A549 (cell line): ENCODE measurements at regions of chr18 and their contacts with region 1.

Region 1: DNA sequence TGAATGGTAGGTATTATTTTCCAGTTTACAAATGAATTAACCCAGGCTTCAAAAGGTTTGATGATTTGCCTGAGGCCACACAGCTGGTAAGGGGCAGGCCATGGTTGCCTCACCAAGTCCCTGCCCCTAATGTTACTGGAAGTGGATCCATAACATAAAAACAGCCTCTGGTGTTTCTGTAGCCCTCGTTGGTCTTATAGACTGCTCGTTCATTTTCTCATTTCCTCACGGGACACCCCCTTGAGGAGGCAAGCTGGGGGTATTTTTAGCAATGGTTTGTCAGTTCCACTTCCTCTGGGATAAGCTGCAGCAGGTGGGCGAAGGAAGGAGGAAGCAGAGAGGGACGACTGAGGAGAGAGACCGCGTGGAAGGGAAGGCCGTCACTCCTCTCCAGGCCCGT is 32.9 kb upstream of the NDUFV2 start:
- DNase-seq: no peak
- ATAC-seq: no peak
- H3K4me3 ChIP-seq: no peak overlapping the region
- H3K27ac ChIP-seq: no peak overlapping the region
- H3K4me1 ChIP-seq: peaks cover 12% of the 10 kb centered on the region; the same call in 2 of the 3 replicates
- CTCF ChIP-seq: no peak
- EP300 ChIP-seq: no peak
- POLR2A ChIP-seq: no peak
- RAD21 ChIP-seq: no peak

Region 2: DNA sequence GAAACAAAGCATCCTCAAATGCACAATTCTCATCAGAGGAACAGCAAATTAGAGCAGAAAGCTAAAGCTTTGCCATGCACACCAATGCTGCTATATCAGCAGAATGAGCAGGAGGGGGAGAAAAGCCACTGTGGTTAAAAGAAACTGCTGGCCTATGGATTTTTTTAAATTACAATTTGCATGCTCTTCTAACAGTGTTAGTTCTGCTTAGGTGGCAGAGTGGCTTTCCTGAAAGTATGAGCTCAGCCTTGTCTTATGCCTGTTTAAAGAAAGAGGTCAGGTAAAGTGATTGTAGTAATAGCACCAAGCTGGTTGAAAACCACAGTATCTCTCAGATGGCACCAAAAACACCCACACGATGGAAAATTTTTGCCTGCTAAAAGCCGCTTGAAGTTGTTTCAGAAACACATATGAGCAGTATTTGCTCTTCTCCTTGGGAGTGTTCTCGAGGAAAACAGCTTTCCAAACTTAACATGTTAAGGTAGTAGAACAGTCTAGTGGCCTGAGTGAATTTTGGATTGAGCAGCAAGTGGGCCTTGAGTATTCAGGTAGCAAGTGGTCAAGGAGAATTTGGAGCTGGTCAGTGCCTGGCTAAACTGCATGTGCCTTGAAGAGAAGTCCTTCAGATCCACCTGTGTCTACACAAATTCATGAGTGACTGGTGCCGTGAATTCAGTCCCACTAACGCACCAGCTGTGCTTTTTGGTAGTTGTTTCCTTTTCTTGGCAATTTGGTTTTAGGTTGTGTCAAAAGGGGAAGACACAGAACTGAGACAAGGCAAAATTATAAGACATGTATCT is 13.3 kb after region 1 on chr18:
- CTCF ChIA-PET with region 1: interaction called, 13 read pairs
- POLR2A ChIA-PET with region 1: no interaction called
- DNase-seq: no peak
- ATAC-seq: no peak
- H3K4me3 ChIP-seq: no peak overlapping the region
- H3K27ac ChIP-seq: 0 out of 6 replicates have a peak overlapping the region, but pooled peaks of 1 of the 2 experiments have one; percentile 31
- H3K4me1 ChIP-seq: 0 out of 3 replicates have a peak, but pooled peaks cover 9% of the 10 kb centered on the region
- CTCF ChIP-seq: no peak
- EP300 ChIP-seq: no peak
- POLR2A ChIP-seq: no peak
- RAD21 ChIP-seq: no peak

Region 3: GRCh38 chr18:9102508-9103375 is 33.1 kb after region 1 on chr18 and contains the start of gene NDUFV2:
- CTCF ChIA-PET with region 1: interaction called, 7 read pairs
- POLR2A ChIA-PET with region 1: interaction called, 13 read pairs
- DNase-seq: peak; percentile 76 to 94
- ATAC-seq: peak; percentile 97
- H3K4me3 ChIP-seq: peak within 1 kb of the TSS; percentile 69
- H3K27ac ChIP-seq: peak within 1 kb of the TSS; percentile 95
- H3K4me1 ChIP-seq: peaks cover 41% of the 10 kb centered on the region
- CTCF ChIP-seq: no peak
- EP300 ChIP-seq: no peak
- POLR2A ChIP-seq: peak; percentile 49
- RAD21 ChIP-seq: 0 out of 5 replicates have a peak, but pooled peaks of 1 of the 2 experiments have one; percentile 11
- polyA plus RNA-seq, gene NDUFV2: 152 and 180 TPM in 2 replicates

Region 4: GRCh38 chr18:9136315-9137155 is 66.9 kb after region 1 on chr18 and contains the start of gene ANKRD12:
- CTCF ChIA-PET with region 1: interaction called, 48 read pairs
- POLR2A ChIA-PET with region 1: no interaction called
- DNase-seq: peak; percentile 83 to 95
- ATAC-seq: peak; percentile 85 to 88
- H3K4me3 ChIP-seq: peak within 1 kb of the TSS; percentile 62
- H3K27ac ChIP-seq: peak within 1 kb of the TSS; percentile 84 to 89
- H3K4me1 ChIP-seq: peaks cover 56% of the 10 kb centered on the region
- CTCF ChIP-seq: no peak
- EP300 ChIP-seq: no peak
- POLR2A ChIP-seq: peak; percentile 31
- RAD21 ChIP-seq: no peak
- polyA plus RNA-seq, gene ANKRD12: 7.3 and 8.0 TPM in 2 replicates

Region 5: DNA sequence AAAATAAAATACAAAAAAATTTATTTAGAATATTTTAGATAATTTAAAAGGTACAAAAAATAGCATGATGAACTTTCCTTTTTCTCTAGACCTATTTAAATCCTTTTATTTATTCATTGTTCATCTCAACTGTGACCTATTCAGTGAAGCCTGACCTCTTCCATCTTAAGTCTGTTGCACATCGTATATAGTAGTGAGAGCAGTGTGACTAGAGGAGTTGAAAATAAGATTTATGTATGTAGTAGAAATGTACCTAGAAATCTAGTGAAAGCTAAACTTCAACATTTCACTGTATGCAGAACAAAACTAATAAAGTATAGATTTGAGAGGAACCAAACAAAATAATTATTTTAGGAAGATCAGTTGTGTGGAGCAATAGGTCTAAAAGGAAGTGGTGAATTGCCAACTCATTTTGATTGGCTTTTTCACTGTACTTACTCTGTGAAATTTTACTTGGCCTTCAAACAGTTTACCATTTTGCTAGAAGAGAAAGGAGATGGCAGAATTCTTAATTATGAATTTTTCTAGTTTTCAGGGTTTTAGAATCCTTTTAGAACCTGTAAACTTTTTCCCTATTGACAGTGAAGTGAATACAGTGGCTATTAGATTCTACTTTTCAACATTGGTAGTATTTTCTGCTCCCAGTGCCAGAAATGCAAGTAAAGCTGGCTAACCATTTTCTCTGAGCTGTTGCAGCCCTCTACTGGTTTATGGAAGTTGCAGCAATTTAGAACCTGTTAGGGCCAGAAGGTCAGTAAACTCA is 78.0 kb after region 1 on chr18:
- CTCF ChIA-PET with region 1: interaction called, 48 read pairs
- POLR2A ChIA-PET with region 1: no interaction called
- DNase-seq: peak; percentile 41 to 75
- ATAC-seq: peak; percentile 84 to 86
- H3K4me3 ChIP-seq: no peak overlapping the region
- H3K27ac ChIP-seq: peak overlapping the region; percentile 12 to 33; a peak in 2 of 6 replicates
- H3K4me1 ChIP-seq: peaks cover 46% of the 10 kb centered on the region
- CTCF ChIP-seq: peak; percentile 71
- EP300 ChIP-seq: no peak
- POLR2A ChIP-seq: no peak
- RAD21 ChIP-seq: peak; percentile 83 to 84